ENCODE measurements at regions of chr6 and their contacts with region 1.

Region 1: GRCh38 chr6:106997390-106998158 is 23.0 kb upstream of the CD24 start:
- DNase-seq: peak in 1 of 2 donors; percentile 56
- H3K4me3 ChIP-seq: no peak overlapping the region
- H3K27ac ChIP-seq: no peak overlapping the region
- H3K4me1 ChIP-seq: no peaks in the 10 kb centered on the region
- H3K27me3 ChIP-seq: no peaks in the 10 kb centered on the region
- CTCF ChIP-seq: peak in 2 of 3 donors; percentile 39 to 41
- POLR2A ChIP-seq: no peak

Region 2: DNA sequence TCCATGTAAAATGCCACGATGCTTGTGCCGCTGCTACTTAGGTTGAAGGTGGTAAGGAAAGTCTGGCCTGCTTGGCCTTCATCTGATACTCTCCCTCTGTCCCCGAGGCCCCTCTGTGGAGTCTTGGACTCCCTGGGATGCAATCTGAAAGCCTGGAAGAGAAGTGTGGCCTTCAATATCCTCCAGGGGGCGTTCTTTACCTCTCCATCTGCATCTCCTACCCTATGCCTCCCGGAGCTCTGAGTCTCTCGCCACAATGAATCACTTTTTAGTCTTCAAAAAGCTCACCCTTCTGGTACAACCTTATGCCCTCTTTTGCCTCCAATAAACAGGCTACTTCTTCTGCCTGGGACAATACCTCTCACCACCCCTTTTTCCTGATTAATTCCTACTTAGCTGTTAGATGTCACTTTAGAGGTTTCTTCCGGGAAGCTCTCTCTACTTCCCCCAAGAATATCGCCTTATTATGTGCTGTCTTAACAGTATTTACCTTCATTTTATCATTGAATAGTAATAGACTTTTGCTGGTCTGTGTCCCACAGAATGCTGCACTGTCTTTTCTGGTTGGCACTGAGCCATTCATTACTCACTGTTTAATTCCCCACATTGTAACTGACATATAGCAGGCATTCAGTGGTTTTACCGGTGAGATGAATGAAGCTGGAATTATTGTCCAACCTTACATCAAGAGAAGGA is 658.1 kb before region 1 on chr6:
- intact Hi-C with region 1: loop called (anchors 10 kb)
- DNase-seq: peak in 1 of 2 donors; percentile 54
- H3K4me3 ChIP-seq: no peak overlapping the region
- H3K27ac ChIP-seq: peak overlapping the region in 1 of 2 donors; percentile 14
- H3K4me1 ChIP-seq: no peaks in the 10 kb centered on the region
- H3K27me3 ChIP-seq: no peaks in the 10 kb centered on the region
- CTCF ChIP-seq: peak; percentile 51 to 79 (median 66)
- POLR2A ChIP-seq: no peak

Region 3: GRCh38 chr6:106883808-106884262 is 113.7 kb before region 1 on chr6:
- intact Hi-C with region 1: no loop called
- DNase-seq: no peak
- H3K4me3 ChIP-seq: no peak overlapping the region
- H3K27ac ChIP-seq: no peak overlapping the region
- H3K4me1 ChIP-seq: no peaks in the 10 kb centered on the region
- H3K27me3 ChIP-seq: no peaks in the 10 kb centered on the region
- CTCF ChIP-seq: no peak
- POLR2A ChIP-seq: no peak

Measured in breast epithelium (tissue), 4 donors.